Activated naive CD4-positive, alpha-beta T cell treated with anti-CD3 and anti-CD28 coated beads for 36 hours (primary cell): ENCODE measurements at regions of chr7 and their contacts with region 1.

Region 1: DNA sequence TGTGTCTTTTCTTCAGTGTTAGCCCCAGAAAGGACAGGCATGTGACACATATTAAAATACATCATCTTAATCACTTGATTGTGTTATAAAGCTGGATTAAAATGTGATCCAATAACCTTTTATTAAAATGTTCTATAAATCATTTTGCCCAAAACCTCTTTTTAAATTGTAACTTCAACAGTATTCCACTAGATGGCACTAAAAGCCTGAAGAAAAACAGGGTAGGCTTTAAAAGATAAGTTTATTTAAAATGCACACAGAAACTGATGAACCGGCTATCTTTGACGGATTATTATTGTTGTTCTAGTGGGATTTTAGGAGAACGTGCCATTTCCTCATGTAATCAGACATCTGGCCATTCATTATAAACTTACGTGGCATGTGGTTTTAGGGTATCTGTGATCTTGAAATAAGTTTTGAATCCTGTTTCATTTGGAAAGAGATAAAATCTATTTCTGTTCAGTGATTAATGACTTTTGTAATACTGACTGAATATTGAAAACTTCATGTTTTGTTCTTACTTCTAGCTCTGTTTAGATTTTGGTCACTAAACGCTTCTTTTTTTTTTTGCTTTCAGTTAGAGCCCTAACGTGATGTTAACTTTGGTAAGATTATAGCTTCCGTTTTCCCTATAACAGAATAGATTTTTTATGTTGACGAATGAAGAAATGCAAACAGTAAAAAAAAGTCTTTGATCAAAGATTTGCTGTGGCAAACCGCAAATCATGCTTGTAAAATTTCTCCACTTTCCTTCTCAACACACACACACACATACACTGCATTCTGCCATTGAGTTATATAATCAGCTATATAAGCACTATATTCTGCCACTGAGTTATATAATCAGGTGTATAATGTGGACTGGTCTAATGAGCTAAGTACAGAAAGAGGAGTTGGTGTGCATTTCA is 13.6 kb downstream of the VPS50 start:
- DNase-seq: no peak
- H3K4me3 Mint-ChIP-seq: no peak overlapping the region
- H3K27ac Mint-ChIP-seq: no peak overlapping the region
- H3K4me1 Mint-ChIP-seq: peaks cover 6% of the 10 kb centered on the region
- H3K27me3 Mint-ChIP-seq: no peaks in the 10 kb centered on the region

Region 2: GRCh38 chr7:92809397-92810241 is 436.2 kb before region 1 on chr7:
- CTCF ChIA-PET with region 1: no interaction called
- intact Hi-C with region 1: no loop called
- DNase-seq: peak; percentile 78
- H3K4me3 Mint-ChIP-seq: no peak overlapping the region
- H3K27ac Mint-ChIP-seq: peak overlapping the region; percentile 54
- H3K4me1 Mint-ChIP-seq: peaks cover 72% of the 10 kb centered on the region
- H3K27me3 Mint-ChIP-seq: no peaks in the 10 kb centered on the region

Region 3: GRCh38 chr7:93374345-93374940 is 128.7 kb after region 1 on chr7:
- CTCF ChIA-PET with region 1: interaction called, 4 read pairs
- intact Hi-C with region 1: loop called (anchors 1 kb)
- DNase-seq: no peak
- H3K4me3 Mint-ChIP-seq: no peak overlapping the region
- H3K27ac Mint-ChIP-seq: no peak overlapping the region
- H3K4me1 Mint-ChIP-seq: no peaks in the 10 kb centered on the region
- H3K27me3 Mint-ChIP-seq: peaks cover 20% of the 10 kb centered on the region

Region 4: GRCh38 chr7:93442478-93443224 is 196.9 kb after region 1 on chr7:
- CTCF ChIA-PET with region 1: no interaction called
- intact Hi-C with region 1: loop called (anchors 10 kb)
- DNase-seq: peak; percentile 46
- H3K4me3 Mint-ChIP-seq: no peak overlapping the region
- H3K27ac Mint-ChIP-seq: no peak overlapping the region
- H3K4me1 Mint-ChIP-seq: no peaks in the 10 kb centered on the region
- H3K27me3 Mint-ChIP-seq: no peaks in the 10 kb centered on the region

Region 5: GRCh38 chr7:93551063-93551904 is 305.5 kb after region 1 on chr7:
- CTCF ChIA-PET with region 1: interaction called, 5 read pairs
- intact Hi-C with region 1: loop called (anchors 1 kb)
- DNase-seq: no peak
- H3K4me3 Mint-ChIP-seq: no peak overlapping the region
- H3K27ac Mint-ChIP-seq: no peak overlapping the region
- H3K4me1 Mint-ChIP-seq: no peaks in the 10 kb centered on the region
- H3K27me3 Mint-ChIP-seq: no peaks in the 10 kb centered on the region

Region 6: DNA sequence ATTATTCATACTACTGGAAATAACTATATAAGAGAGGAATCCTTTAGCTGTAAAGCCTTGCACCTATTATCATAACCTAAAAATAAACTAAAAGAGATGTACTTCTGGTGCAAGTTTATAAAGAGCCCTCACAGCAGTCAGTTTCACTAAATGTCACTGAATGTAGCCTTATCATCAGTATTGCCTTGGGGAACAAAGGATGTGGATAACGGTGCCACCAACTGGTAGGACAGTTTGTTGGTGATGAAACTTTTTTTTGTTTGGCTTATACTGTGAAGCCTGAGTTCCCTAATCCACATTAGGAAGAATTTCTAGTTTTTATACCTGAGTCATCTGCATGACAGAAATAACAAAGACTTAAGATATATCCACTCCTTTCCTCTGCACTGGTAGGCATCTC is 1031.0 kb after region 1 on chr7:
- CTCF ChIA-PET with region 1: no interaction called
- intact Hi-C with region 1: loop called (anchors 5 kb)
- DNase-seq: peak; percentile 5
- H3K4me3 Mint-ChIP-seq: no peak overlapping the region
- H3K27ac Mint-ChIP-seq: no peak overlapping the region
- H3K4me1 Mint-ChIP-seq: no peaks in the 10 kb centered on the region
- H3K27me3 Mint-ChIP-seq: peaks cover 9% of the 10 kb centered on the region

Region 7: GRCh38 chr7:94395141-94396036 is 1149.6 kb after region 1 on chr7:
- CTCF ChIA-PET with region 1: interaction called, 3 read pairs
- intact Hi-C with region 1: loop called (anchors 1 kb)
- DNase-seq: peak; percentile 46
- H3K4me3 Mint-ChIP-seq: no peak overlapping the region
- H3K27ac Mint-ChIP-seq: no peak overlapping the region
- H3K4me1 Mint-ChIP-seq: peaks cover 7% of the 10 kb centered on the region
- H3K27me3 Mint-ChIP-seq: peaks cover 35% of the 10 kb centered on the region

Region 8: DNA sequence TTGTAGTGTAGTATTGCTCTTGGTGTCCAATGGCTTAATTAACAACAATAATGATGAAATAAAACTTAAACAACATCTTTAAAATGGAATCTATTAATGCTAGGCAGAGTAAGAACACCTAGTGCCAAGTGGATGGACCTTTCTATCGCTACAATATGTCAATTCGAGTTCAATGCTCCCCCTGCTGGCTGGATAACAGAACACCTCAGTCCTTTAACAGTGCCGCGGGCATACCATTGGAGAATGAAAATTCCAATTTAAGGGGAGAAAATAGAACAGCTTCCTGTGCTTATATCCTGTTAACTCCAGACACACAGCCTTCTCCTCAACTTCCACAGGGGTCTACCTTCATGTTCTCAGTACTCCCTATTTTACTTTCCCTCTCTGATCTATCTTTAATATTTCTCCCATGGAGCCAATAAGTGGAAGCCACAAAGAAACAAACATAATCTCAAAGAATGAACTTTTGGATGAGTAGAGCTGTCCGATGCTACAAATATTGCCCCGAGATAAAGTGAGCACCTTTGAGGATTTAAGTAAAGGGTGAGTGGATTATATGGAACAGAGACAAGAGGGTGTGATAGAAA is 1190.3 kb after region 1 on chr7:
- CTCF ChIA-PET with region 1: interaction called, 3 read pairs
- intact Hi-C with region 1: loop called (anchors 2 kb)
- DNase-seq: peak; percentile 68
- H3K4me3 Mint-ChIP-seq: no peak overlapping the region
- H3K27ac Mint-ChIP-seq: no peak overlapping the region
- H3K4me1 Mint-ChIP-seq: no peaks in the 10 kb centered on the region
- H3K27me3 Mint-ChIP-seq: peaks cover 20% of the 10 kb centered on the region